ENCODE measurements at regions of chr4 and their contacts with region 1.

Region 1: DNA sequence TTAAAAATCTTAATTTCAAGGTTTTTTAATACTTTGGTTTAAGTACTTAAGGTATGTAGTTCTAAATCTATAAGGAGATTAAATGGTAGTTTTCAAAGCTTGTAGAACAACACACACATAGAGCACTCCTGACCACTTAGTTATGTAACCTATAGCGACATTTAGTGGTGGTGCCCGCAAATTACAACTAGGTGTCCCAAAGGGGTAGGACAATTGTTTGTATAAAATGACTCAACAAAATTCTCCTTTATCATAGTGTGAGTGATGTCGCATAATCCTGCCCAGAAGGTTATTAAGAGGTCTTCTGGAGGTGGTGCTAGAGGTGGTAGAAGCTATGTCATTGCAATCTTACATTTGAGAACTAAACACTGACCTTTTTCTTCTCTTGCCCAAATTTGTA is 373.0 kb upstream of the RASGEF1B start:
- DNase-seq: peak; percentile 72 to 79
- ATAC-seq: peak; percentile 96

Region 2: DNA sequence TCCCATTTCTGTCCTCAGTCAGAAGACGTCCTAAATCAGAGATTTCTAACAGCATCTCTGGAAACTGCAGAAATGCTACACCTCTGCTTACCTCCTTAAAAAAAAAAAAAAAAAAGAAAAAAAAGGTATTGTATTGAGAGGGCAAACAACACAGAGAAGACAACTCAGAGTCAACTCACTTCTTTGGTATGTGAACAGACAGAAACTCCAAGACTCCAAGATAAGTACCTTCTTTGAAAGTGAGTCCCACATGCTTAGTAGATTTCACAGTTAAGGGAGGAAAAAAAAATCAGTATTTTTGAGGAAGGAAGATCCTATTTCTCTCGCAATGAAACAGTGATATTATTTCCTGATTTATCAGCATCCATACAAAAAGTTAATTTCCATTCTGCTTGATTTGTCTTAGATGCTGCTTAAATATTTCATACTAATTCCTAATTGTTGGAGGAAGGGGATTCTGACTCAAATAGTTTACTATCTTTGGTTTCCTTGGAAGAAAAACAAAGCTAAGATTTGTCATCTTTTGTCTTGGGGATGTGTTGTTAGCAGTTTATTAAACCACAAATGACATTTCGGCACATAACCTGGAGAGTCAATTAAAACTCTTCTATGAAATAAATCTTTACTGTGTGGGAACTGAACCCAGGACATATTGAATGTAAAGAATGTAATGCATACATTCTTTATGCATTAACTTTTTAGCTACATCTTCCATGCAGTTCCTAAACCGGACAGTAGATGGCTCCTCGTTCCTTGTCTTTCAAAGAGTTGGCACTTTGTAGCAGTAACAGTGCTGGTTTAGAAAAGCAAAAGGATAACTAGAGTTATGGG is 377.7 kb before region 1 on chr4:
- intact Hi-C with region 1: loop called (anchors 1 to 10 kb)
- DNase-seq: peak; percentile 61 to 86
- ATAC-seq: no peak